ENCODE measurements at regions of chr6 and their contacts with region 1.

Region 1: GRCh38 chr6:2103644-2104523 is 141.5 kb downstream of the GMDS start:
- DNase-seq: peak; percentile 54
- H3K4me3 ChIP-seq: peak overlapping the region; percentile 12 to 38 (median 32)
- H3K27ac ChIP-seq: peak overlapping the region; percentile 32
- H3K4me1 ChIP-seq: peaks cover 7% of the 10 kb centered on the region
- H3K27me3 ChIP-seq: no peaks in the 10 kb centered on the region
- CTCF ChIP-seq: peak; percentile 47 to 68

Region 2: GRCh38 chr6:1609648-1610496 is 494.0 kb before region 1 on chr6 and contains the start of gene FOXC1:
- CTCF ChIA-PET with region 1: no interaction called
- dilution Hi-C with region 1: no loop called
- in situ Hi-C with region 1: loop called (anchors 10 to 25 kb)
- intact Hi-C with region 1: loop called (anchors 1 kb)
- DNase-seq: peak; percentile 93
- H3K4me3 ChIP-seq: peak within 1 kb of the TSS; percentile 66 to 87 (median 77)
- H3K27ac ChIP-seq: peak within 1 kb of the TSS; percentile 75
- H3K4me1 ChIP-seq: peaks cover 10% of the 10 kb centered on the region
- H3K27me3 ChIP-seq: no peaks in the 10 kb centered on the region
- CTCF ChIP-seq: no peak
- total RNA-seq, gene FOXC1: 12.1 to 15.8 TPM

Region 3: GRCh38 chr6:1856381-1856780 is 247.5 kb before region 1 on chr6:
- CTCF ChIA-PET with region 1: no interaction called
- dilution Hi-C with region 1: no loop called
- in situ Hi-C with region 1: no loop called
- intact Hi-C with region 1: loop called (anchors 5 kb)
- DNase-seq: peak; percentile 61
- H3K4me3 ChIP-seq: no peak overlapping the region
- H3K27ac ChIP-seq: no peak overlapping the region
- H3K4me1 ChIP-seq: peaks cover 6% of the 10 kb centered on the region
- H3K27me3 ChIP-seq: no peaks in the 10 kb centered on the region
- CTCF ChIP-seq: peak in 1 of 2 donors; percentile 3

Region 4: DNA sequence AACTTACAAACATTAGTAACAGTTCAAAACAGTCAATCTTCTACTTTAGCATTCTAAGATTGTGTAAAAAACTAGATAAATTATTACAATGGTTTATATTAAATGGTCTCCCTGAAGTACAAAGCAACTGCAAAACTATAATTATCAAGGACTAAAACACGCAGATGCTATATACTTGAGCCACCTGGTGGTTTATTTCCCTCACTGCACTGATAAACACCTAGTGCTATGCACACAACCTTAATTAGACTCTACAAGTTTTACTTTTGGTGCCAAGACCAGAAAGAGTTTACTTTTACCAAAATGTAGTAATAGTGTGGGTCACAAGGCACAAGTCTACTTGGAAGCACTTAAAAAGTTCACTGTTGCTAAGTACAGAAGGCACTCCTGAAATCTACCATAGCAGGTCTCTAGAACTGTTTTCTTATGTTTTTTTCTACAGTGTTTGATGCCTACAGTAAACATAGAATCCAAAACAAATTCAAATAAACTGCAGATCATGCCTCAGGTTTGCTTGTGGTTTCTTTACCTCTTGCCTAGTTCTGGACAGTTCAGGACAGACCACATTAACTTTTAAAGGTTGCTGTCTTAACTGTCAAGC is 92.3 kb after region 1 on chr6:
- CTCF ChIA-PET with region 1: no interaction called
- dilution Hi-C with region 1: no loop called
- in situ Hi-C with region 1: no loop called
- intact Hi-C with region 1: loop called (anchors 1 kb)
- DNase-seq: peak; percentile 40
- H3K4me3 ChIP-seq: no peak overlapping the region
- H3K27ac ChIP-seq: no peak overlapping the region
- H3K4me1 ChIP-seq: peaks cover 12% of the 10 kb centered on the region
- H3K27me3 ChIP-seq: no peaks in the 10 kb centered on the region
- CTCF ChIP-seq: peak; percentile 74 to 84

Region 5: GRCh38 chr6:2448820-2449571 is 345.1 kb after region 1 on chr6:
- CTCF ChIA-PET with region 1: no interaction called
- dilution Hi-C with region 1: no loop called
- in situ Hi-C with region 1: no loop called
- intact Hi-C with region 1: loop called (anchors 5 kb)
- DNase-seq: peak; percentile 64
- H3K4me3 ChIP-seq: peak overlapping the region in 2 of 3 experiments; percentile 2 to 37
- H3K27ac ChIP-seq: no peak overlapping the region
- H3K4me1 ChIP-seq: peaks cover 6% of the 10 kb centered on the region
- H3K27me3 ChIP-seq: no peaks in the 10 kb centered on the region
- CTCF ChIP-seq: peak; percentile 83